ENCODE measurements at regions of chr7 and their contacts with region 1.

Region 1: GRCh38 chr7:128209229-128210035 is 31.6 kb upstream of the LEP start:
- DNase-seq: peak; percentile 79
- ATAC-seq: peak; percentile 80

Region 2: DNA sequence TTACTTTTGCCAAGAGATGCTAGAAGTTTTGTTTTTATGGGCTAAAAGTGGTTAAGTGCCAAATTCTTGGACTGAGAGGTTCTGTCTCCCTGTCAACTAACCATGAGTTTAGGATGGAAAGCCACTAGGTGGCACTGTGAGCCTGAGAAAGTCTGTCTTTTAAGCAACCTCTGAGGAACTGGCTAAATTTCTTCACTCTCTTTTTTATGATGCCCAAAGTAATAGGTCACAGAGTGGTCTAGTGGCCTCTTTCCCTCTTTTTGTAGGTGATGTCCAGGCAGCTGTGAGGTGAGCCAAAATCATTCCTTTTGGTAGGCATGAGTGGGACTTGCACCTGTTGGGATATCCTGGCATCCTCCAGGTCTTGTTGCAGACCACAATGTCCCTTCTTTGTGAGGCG is 500.6 kb before region 1 on chr7:
- intact Hi-C with region 1: loop called (anchors 2 kb)
- DNase-seq: no peak
- ATAC-seq: peak; percentile 81

Region 3: DNA sequence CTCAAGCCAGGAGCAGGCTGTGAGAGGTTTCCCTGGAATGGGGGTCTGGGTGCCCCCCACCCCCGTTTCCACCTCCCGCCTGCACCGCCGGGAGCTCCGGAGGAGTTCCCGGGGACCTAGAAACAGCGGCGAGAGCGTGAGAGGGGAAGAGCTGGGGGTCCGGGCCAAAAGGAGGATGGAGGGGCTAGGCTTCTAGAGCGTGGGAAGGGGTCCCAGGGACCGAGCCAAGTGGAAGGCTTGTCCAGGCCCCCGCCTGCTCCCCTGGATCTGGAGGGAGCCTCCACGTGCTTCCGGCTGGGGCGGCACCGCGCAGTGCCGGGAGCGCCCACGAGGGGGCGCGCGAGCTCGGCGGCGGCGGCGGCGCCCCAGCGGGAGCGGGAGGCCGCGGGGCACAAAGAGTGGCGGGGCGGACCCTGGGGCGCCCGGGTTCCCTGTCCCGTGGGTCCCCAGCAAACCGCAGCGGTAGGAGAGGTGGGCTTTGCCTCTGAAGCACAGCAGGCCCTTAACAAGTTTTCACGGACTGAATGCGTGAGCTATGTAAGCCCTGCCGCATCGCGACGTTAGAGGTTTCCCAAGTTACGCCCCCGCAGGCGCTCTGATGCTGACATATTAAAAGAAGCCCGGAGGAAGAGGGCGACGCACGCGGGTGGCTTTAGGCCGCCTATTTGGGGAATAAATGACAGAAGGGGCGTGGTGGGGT is 73.8 kb before region 1 on chr7:
- intact Hi-C with region 1: loop called (anchors 2 kb)
- DNase-seq: peak; percentile 82
- ATAC-seq: peak; percentile 85

Measured in Right ventricle myocardium inferior (tissue), 1 donor.